Uterus (tissue), 4 donors: ENCODE measurements at regions of chr6 and their contacts with region 1.

Region 1: GRCh38 chr6:70955441-70956190 is 1.2 kb downstream of the B3GAT2 start:
- DNase-seq: peak; percentile 52 to 73
- H3K4me3 ChIP-seq: peak overlapping the region; percentile 25 to 38
- H3K27ac ChIP-seq: no peak overlapping the region
- H3K4me1 ChIP-seq: peaks cover 0 to 13% of the 10 kb centered on the region in 2 donors
- H3K27me3 ChIP-seq: no peaks in the 10 kb centered on the region
- CTCF ChIP-seq: peak; percentile 67 to 83 (median 74)
- POLR2A ChIP-seq: no peak

Region 2: GRCh38 chr6:70709826-70710225 is 245.8 kb before region 1 on chr6:
- intact Hi-C with region 1: loop called (anchors 10 kb)
- DNase-seq: no peak
- H3K4me3 ChIP-seq: no peak overlapping the region
- H3K27ac ChIP-seq: no peak overlapping the region
- H3K4me1 ChIP-seq: no peaks in the 10 kb centered on the region
- H3K27me3 ChIP-seq: no peaks in the 10 kb centered on the region
- CTCF ChIP-seq: no peak
- POLR2A ChIP-seq: no peak

Region 3: GRCh38 chr6:71028236-71028876 is 72.7 kb after region 1 on chr6:
- intact Hi-C with region 1: no loop called
- DNase-seq: no peak
- H3K4me3 ChIP-seq: no peak overlapping the region
- H3K27ac ChIP-seq: no peak overlapping the region
- H3K4me1 ChIP-seq: no peaks in the 10 kb centered on the region
- H3K27me3 ChIP-seq: no peaks in the 10 kb centered on the region
- CTCF ChIP-seq: no peak
- POLR2A ChIP-seq: no peak